Posterior vena cava (tissue), 2 donors: ENCODE measurements at regions of chr17 and their contacts with region 1.

Region 1: DNA sequence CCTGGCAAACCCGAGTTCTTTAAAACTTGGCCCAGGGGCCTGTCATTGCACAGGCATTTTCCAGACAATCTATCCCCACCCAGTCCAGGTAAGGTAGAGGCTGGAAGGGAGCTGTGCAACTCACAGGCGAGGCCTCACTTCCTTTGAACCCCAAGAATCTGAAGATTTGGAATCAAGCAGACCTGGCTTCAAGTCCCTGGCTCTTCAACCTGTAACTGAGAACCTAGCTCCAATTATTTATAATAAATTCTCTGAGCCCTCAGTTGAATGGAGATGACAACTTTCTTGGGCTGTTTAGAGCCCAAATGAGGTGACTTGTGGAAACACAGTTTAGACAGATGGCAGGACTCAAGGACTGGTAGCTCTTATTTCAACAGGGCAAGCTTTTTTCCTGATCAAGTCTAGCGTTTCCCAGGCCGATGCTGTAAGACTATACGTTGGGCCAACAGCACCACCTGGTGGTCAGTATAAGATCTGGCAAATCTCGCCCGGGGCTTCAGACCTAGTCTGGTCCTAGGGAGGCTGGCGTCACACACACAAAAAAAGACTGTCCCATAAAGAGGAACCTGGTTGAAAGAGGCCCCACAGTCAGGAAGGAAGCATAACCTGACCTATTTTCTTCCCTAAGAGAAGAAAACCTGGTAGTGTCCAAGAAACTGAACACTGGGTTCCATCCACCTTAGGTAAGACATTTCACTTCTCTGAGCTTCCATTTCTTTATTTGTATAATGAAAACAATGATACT is 117.9 kb downstream of the C17orf67 start:
- DNase-seq: peak; percentile 92

Region 2: GRCh38 chr17:56592487-56593085 is 123.2 kb before region 1 on chr17:
- intact Hi-C with region 1: loop called (anchors 1 to 5 kb)
- DNase-seq: peak; percentile 84

Region 3: DNA sequence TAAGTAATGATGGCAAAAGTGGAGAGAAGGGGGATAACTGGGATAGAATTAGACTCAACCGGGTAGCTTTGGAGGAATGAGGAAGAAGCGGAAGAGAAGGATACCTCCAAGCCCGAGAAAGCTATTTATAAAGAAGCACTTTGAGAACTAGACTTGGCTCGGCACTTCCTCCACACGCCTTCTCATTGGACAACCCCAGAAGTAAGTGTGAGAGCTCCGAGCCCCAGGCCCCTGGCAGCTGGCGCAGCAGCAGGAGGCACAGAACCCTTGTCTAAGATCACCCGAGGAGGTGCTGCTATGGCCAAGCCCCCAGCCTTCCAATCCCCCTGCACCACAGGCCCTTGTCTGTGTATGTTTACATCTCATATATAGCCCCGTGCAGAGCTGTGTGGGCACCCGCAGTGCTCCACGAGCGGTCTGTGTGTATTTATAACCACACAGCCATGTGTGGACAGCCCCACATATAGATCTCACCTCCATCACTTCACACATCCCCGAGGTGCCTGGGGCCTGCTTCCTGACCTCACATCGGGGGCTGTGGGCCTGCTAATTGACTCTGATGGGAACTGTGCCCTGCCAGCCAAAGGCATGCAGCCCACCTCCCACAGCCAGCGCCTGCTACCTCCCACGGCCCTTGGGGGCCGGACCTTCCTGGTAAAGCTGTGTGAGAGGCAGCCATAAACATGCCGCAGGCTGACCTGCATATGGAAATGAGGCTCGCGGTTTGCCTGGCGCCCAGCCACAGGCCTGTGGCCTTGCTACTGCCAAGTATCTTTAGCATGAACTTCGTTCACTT is 21.8 kb after region 1 on chr17:
- intact Hi-C with region 1: no loop called
- DNase-seq: no peak